ENCODE measurements at regions of chr12 and their contacts with region 1.

Region 1: GRCh38 chr12:104569346-104570173 is 112.8 kb downstream of the CHST11 start:
- DNase-seq: peak; percentile 86
- H3K4me3 Mint-ChIP-seq: peak overlapping the region; percentile 66
- H3K27ac Mint-ChIP-seq: peak overlapping the region; percentile 83
- H3K4me1 Mint-ChIP-seq: peaks cover 53% of the 10 kb centered on the region
- H3K27me3 Mint-ChIP-seq: no peaks in the 10 kb centered on the region

Region 2: GRCh38 chr12:104494137-104494792 is 75.3 kb before region 1 on chr12:
- intact Hi-C with region 1: loop called (anchors 2 kb)
- DNase-seq: peak; percentile 77
- H3K4me3 Mint-ChIP-seq: peak overlapping the region; percentile 81
- H3K27ac Mint-ChIP-seq: peak overlapping the region; percentile 81
- H3K4me1 Mint-ChIP-seq: peaks cover 74% of the 10 kb centered on the region
- H3K27me3 Mint-ChIP-seq: no peaks in the 10 kb centered on the region

Region 3: GRCh38 chr12:104604070-104604994 is 34.8 kb after region 1 on chr12:
- intact Hi-C with region 1: loop called (anchors 2 kb)
- DNase-seq: peak; percentile 85
- H3K4me3 Mint-ChIP-seq: peak overlapping the region; percentile 55
- H3K27ac Mint-ChIP-seq: peak overlapping the region; percentile 85
- H3K4me1 Mint-ChIP-seq: peaks cover 59% of the 10 kb centered on the region
- H3K27me3 Mint-ChIP-seq: no peaks in the 10 kb centered on the region

Region 4: GRCh38 chr12:105053116-105053572 is 483.6 kb after region 1 on chr12:
- intact Hi-C with region 1: no loop called
- DNase-seq: peak; percentile 94
- H3K4me3 Mint-ChIP-seq: no peak overlapping the region
- H3K27ac Mint-ChIP-seq: no peak overlapping the region
- H3K4me1 Mint-ChIP-seq: peaks cover 4% of the 10 kb centered on the region
- H3K27me3 Mint-ChIP-seq: peaks cover 3% of the 10 kb centered on the region

Region 5: GRCh38 chr12:105076098-105076497 is 506.5 kb after region 1 on chr12:
- intact Hi-C with region 1: no loop called
- DNase-seq: no peak
- H3K4me3 Mint-ChIP-seq: no peak overlapping the region
- H3K27ac Mint-ChIP-seq: no peak overlapping the region
- H3K4me1 Mint-ChIP-seq: no peaks in the 10 kb centered on the region
- H3K27me3 Mint-ChIP-seq: peaks cover 16% of the 10 kb centered on the region

Measured in activated CD4-positive, alpha-beta T cell treated with anti-CD3 and anti-CD28 coated beads, Interleukin-2, amount 10 ng/mL, durations not matched to agents 24 days and 14 days (primary cell).